Calu3 (cell line): ENCODE measurements at regions of chr1 and their contacts with region 1.

Region 1: GRCh38 chr1:68173911-68174737 is 58.2 kb downstream of the WLS start:
- DNase-seq: peak; percentile 74
- H3K4me3 Mint-ChIP-seq: peak overlapping the region; percentile 56
- H3K27ac Mint-ChIP-seq: peak overlapping the region; percentile 90
- H3K4me1 Mint-ChIP-seq: peaks cover 76% of the 10 kb centered on the region
- H3K27me3 Mint-ChIP-seq: no peaks in the 10 kb centered on the region
- CTCF ChIP-seq: no peak

Region 2: GRCh38 chr1:67347688-67348472 is 826.2 kb before region 1 on chr1:
- CTCF ChIA-PET with region 1: no interaction called
- intact Hi-C with region 1: no loop called
- DNase-seq: peak; percentile 19
- H3K4me3 Mint-ChIP-seq: no peak overlapping the region
- H3K27ac Mint-ChIP-seq: no peak overlapping the region
- H3K4me1 Mint-ChIP-seq: no peaks in the 10 kb centered on the region
- H3K27me3 Mint-ChIP-seq: no peaks in the 10 kb centered on the region
- CTCF ChIP-seq: peak; percentile 41

Region 3: GRCh38 chr1:67908250-67908936 is 265.7 kb before region 1 on chr1:
- CTCF ChIA-PET with region 1: no interaction called
- intact Hi-C with region 1: no loop called
- DNase-seq: no peak
- H3K4me3 Mint-ChIP-seq: no peak overlapping the region
- H3K27ac Mint-ChIP-seq: no peak overlapping the region
- H3K4me1 Mint-ChIP-seq: peaks cover 10% of the 10 kb centered on the region
- H3K27me3 Mint-ChIP-seq: no peaks in the 10 kb centered on the region
- CTCF ChIP-seq: no peak

Region 4: DNA sequence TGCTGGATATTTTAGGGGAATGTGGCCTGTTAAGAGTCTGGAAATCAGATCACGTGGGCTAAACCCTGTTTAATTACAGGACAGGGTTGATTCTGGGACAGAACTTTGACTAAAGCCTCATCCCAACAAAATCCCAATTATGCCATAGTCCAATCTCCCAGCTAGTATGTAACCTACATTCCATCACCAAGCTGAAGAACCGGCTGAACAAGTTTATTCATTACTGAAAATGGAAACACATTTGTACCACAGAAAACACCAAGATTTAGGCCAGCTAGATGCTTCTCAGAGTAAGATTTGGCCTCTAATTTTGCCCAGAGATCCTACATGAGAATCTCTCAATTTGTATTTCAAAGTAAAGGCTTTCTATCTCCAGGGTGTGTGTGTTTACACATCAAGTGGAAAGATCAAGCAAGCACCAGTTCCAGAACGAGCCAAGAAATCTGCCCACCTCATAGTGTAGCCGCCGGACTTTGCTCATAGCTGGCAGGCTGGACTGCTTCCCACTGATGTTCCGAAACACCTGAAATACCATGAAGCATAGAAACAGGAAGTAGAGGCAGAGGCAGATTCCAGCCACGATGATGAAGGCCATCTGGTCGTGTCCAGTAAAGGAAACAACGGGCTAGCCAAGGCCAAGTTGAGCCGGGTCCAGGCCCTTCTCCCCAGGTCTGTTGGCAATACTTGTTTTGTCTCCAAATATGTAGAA is 28.6 kb before region 1 on chr1:
- CTCF ChIA-PET with region 1: no interaction called
- intact Hi-C with region 1: loop called (anchors 2 kb)
- DNase-seq: peak; percentile 49
- H3K4me3 Mint-ChIP-seq: peak overlapping the region; percentile 31
- H3K27ac Mint-ChIP-seq: peak overlapping the region; percentile 83
- H3K4me1 Mint-ChIP-seq: peaks cover 19% of the 10 kb centered on the region
- H3K27me3 Mint-ChIP-seq: no peaks in the 10 kb centered on the region
- CTCF ChIP-seq: no peak

Region 5: DNA sequence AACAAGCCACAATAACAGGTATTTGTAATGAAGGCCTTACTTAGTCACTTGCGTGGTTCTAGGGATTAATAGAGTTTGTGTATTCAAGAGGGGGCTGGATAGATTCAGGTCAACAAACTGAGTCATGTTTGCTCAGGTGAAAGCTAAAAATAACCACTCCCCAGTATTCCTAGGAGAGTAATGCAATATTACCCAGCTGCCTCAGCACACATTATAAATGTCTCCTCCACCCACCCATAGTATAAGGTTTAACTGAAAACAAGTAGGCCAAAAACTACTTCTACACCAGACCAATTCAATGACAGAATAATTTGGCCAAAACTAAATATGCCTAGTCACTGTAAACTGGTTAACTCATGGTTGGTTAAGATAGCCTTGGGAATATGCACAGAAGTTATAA is 23.8 kb after region 1 on chr1:
- CTCF ChIA-PET with region 1: interaction called, 4 read pairs
- intact Hi-C with region 1: loop called (anchors 2 kb)
- DNase-seq: peak; percentile 24
- H3K4me3 Mint-ChIP-seq: no peak overlapping the region
- H3K27ac Mint-ChIP-seq: peak overlapping the region; percentile 89
- H3K4me1 Mint-ChIP-seq: peaks cover 32% of the 10 kb centered on the region
- H3K27me3 Mint-ChIP-seq: no peaks in the 10 kb centered on the region
- CTCF ChIP-seq: no peak